ENCODE measurements at regions of chr7 and their contacts with region 1.

Region 1: GRCh38 chr7:105141068-105141467 is 127.1 kb downstream of the KMT2E start:
- DNase-seq: no peak
- ATAC-seq: peak in 3 of 4 donors; percentile 37 to 59 (median 39)
- H3K4me3 ChIP-seq: no peak overlapping the region
- H3K27ac ChIP-seq: no peak overlapping the region
- H3K4me1 ChIP-seq: peaks cover 0 to 2% (median 2%) of the 10 kb centered on the region in 3 donors
- H3K27me3 ChIP-seq: no peaks in the 10 kb centered on the region
- CTCF ChIP-seq: no peak

Region 2: DNA sequence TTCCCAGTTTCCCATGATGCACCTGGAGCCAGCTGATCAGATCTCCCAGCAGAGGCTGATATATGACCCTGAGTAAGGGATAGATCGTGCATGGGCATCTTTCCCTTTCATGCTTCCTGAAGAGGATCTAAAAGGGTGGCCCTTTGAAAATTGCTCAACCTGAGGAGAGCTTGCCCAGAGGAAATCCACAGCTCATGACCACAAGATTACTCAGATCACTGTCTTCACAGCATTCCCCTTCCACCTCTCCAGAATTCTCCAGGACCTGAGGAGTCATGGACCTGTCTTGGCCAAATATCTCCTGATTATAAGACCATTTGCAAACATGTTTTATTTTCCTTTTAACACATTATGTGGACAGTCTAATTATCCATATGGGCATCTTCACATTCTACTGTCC is 484.6 kb before region 1 on chr7:
- intact Hi-C with region 1: no loop called
- DNase-seq: no peak
- ATAC-seq: no peak
- H3K4me3 ChIP-seq: no peak overlapping the region
- H3K27ac ChIP-seq: no peak overlapping the region
- H3K4me1 ChIP-seq: no peaks in the 10 kb centered on the region
- H3K27me3 ChIP-seq: no peaks in the 10 kb centered on the region
- CTCF ChIP-seq: no peak

Region 3: DNA sequence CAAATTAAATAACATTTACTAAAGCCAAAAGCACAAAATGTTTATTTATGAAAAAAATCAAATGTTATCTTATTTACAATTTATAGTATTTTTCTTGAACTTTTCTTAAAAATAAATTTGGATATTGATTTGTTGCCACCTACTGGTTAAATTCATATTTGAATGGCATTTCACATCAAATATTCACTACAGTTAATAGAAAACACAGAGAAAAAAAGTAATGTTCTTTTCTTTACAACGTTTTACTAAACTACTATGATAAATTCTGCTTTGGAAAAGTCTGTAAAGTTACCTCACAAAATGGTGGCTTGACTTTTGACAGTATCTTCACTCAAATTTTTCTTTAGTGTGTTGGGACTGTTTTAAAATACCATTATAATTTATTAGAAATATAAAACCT is 194.9 kb after region 1 on chr7:
- intact Hi-C with region 1: loop called in 1 of 3 experiments (anchors 10 kb)
- DNase-seq: no peak
- ATAC-seq: no peak
- H3K4me3 ChIP-seq: no peak overlapping the region
- H3K27ac ChIP-seq: no peak overlapping the region
- H3K4me1 ChIP-seq: no peaks in the 10 kb centered on the region
- H3K27me3 ChIP-seq: no peaks in the 10 kb centered on the region
- CTCF ChIP-seq: peak in 2 of 4 donors; percentile 15 to 24

Measured in pancreas (tissue), 10 donors.